ENCODE measurements at regions of chr4 and their contacts with region 1.

Region 1: DNA sequence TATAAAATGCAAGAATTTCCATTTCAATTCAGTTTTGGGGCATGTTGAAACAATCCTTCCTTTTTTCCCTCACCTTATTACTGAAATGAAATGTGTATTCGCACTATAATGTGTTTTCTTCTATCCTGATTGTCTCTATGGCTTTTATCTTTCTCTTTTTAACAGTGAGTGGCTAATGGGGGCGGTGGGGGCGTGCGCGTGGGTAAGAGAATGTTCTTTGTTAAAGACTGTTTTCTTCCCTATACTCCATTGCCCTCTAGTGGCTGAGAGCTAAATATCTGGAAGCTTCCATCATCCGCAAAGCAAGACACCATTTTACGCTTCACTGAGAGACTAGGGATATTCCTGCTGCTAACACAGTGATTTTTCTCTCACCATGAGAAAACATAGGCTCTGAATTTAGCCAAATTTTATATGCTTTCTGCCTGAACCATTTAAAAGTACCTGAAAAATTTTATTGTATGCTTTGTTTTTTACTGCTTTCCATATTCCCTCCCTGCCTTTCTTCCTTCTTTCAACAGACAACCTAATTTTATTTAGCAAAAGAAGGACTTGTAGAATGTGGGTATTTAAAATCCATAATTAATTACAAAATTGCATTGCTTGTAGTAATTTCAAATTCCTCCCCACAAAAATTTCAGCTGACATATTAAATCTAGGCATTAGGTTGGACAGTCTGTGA is 194.0 kb downstream of the GASK1B start:
- DNase-seq: peak; percentile 27
- H3K4me3 ChIP-seq: no peak overlapping the region
- H3K27ac ChIP-seq: no peak overlapping the region
- H3K4me1 ChIP-seq: no peaks in the 10 kb centered on the region
- H3K27me3 ChIP-seq: no peaks in the 10 kb centered on the region
- CTCF ChIP-seq: peak; percentile 83

Region 2: GRCh38 chr4:157217708-157218107 is 761.1 kb before region 1 on chr4:
- intact Hi-C with region 1: loop called (anchors 2 kb)
- DNase-seq: no peak
- H3K4me3 ChIP-seq: no peak overlapping the region
- H3K27ac ChIP-seq: no peak overlapping the region
- H3K4me1 ChIP-seq: no peaks in the 10 kb centered on the region
- H3K27me3 ChIP-seq: peaks cover 27% of the 10 kb centered on the region
- CTCF ChIP-seq: no peak

Region 3: GRCh38 chr4:157372567-157372966 is 606.3 kb before region 1 on chr4:
- intact Hi-C with region 1: no loop called
- DNase-seq: no peak
- H3K4me3 ChIP-seq: no peak overlapping the region
- H3K27ac ChIP-seq: no peak overlapping the region
- H3K4me1 ChIP-seq: no peaks in the 10 kb centered on the region
- H3K27me3 ChIP-seq: no peaks in the 10 kb centered on the region
- CTCF ChIP-seq: no peak

Region 4: DNA sequence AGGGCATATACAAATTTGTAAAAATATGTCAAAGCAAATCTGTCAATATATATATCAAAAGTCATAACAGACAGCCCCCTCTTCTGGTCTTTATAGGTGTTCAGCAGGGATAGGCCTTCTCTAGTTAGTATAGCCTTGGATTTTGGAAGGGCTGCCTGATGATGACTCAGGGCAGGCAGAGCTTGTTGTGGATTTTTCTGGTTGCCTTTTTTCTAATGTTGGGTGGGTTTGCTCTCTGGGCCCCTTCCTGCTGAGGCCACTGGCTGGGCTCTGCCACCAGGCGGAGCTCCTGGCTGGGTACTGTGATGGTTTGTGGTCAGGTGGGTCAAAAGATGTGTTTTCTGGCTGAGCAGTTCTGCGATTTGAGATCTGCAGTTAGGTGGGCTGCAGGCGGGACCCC is 464.1 kb before region 1 on chr4:
- intact Hi-C with region 1: loop called (anchors 5 kb)
- DNase-seq: no peak
- H3K4me3 ChIP-seq: no peak overlapping the region
- H3K27ac ChIP-seq: no peak overlapping the region
- H3K4me1 ChIP-seq: no peaks in the 10 kb centered on the region
- H3K27me3 ChIP-seq: no peaks in the 10 kb centered on the region
- CTCF ChIP-seq: no peak